Right cardiac atrium (tissue), 5 donors: ENCODE measurements at regions of chr22 and their contacts with region 1.

Region 1: DNA sequence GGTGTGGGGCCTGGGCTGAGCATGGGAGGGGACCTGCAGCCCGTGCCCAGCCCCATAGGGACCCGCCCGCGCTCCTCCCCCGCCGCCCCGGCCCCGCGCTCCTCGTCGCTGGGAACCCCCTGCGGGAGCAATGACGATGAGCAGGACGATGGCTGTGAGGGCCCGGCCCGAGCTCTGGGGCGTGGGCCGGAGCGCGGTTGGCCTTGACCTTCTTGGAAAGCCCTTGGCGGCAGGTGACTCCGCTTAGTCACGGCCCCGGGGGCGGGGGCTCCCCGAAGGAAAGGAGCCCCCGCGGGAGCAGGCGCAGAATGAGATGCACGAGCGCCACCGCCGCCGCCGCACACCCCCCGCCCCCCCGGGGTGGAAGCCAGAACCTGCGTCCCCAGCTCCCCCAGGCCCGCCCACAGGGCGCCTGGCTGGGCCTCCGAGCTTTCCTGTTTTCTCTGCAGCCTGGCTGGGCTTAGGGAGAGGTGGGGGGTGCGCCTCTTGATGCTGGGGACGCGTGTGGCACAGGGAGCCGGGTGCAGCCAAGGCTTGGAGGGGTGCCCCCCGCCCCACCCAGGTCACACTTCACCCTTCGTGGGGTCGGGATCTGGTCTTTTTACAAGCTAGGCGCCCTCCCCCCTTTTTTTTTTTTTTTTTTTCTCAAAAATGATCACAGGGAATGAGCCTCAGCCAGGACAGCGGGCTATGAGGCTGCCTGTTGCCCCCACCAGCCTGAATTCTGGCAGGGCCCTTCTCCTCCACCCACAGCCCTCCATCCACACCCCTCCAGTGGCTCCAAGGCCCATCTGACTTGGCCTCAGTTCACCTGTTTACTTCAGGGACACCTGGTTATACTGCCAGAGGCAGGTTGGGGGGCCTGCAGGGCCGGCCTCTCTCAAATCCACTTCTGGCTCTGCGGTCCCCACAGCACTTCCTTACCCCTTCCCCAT is 17.9 kb downstream of the CRELD2 start:
- DNase-seq: peak; percentile 95 to 96 (median 96)
- ATAC-seq: peak; percentile 72 to 86
- H3K4me3 ChIP-seq: peak overlapping the region; percentile 47
- H3K27ac ChIP-seq: peak overlapping the region; percentile 53
- H3K4me1 ChIP-seq: peaks cover 19% of the 10 kb centered on the region
- H3K27me3 ChIP-seq: no peaks in the 10 kb centered on the region

Region 2: DNA sequence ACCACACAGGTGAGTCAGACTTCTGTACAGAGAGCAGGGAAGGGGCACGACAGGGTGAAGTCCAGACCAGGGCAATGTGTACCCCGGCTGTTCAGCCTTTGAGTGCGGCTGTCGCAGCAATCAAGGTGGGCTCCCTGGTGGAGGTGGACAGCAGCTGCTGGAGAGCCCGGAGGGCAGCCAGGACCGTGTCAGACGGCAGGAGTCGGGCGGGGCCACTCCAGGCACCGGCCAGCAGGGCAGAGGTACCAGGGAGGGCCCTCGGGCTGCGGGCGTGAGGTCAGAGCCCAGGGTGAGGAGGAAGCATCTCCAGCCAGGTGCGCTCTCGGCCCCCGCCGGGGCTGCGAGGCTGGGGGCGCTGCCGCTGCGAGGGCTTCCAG is 23.5 kb after region 1 on chr22:
- intact Hi-C with region 1: loop called in 1 of 4 experiments (anchors 2 kb)
- DNase-seq: no peak
- ATAC-seq: peak; percentile 0 to 16
- H3K4me3 ChIP-seq: peak overlapping the region; percentile 10
- H3K27ac ChIP-seq: peak overlapping the region; percentile 97
- H3K4me1 ChIP-seq: peaks cover 9% of the 10 kb centered on the region
- H3K27me3 ChIP-seq: no peaks in the 10 kb centered on the region

Region 3: DNA sequence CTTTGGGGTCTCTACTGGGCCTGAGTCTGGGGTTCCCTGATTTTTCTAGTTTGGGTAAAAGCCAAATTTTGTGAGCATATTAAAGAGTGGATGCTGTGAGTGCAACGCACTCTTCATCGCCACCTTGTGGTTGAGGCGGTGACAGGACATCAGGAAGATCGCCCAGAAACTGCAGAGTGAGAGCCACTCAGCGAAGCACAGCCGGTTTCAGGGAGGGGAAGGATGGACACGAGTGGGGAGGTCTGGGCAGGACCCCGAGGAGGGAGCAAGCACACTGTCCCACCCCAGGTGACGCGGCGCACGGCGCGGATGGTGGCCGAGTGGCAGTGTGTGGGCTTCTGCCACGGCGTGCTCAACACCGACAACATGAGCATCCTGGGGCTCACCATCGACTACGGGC is 273.6 kb after region 1 on chr22:
- intact Hi-C with region 1: loop called in 1 of 4 experiments (anchors 10 kb)
- DNase-seq: peak; percentile 77 to 87 (median 79)
- ATAC-seq: peak; percentile 7 to 28
- H3K4me3 ChIP-seq: no peak overlapping the region
- H3K27ac ChIP-seq: no peak overlapping the region
- H3K4me1 ChIP-seq: no peaks in the 10 kb centered on the region
- H3K27me3 ChIP-seq: no peaks in the 10 kb centered on the region